ENCODE measurements at regions of chr14 and their contacts with region 1.

Region 1: GRCh38 chr14:103085106-103086091 is 1.4 kb downstream of the LBHD2 start:
- DNase-seq: no peak
- ATAC-seq: no peak
- H3K4me3 ChIP-seq: no peak overlapping the region
- H3K27ac ChIP-seq: no peak overlapping the region
- H3K4me1 ChIP-seq: peaks cover 0 to 8% (median 0%) of the 10 kb centered on the region in 9 donors
- H3K27me3 ChIP-seq: peaks cover 0 to 51% (median 42%) of the 10 kb centered on the region in 7 donors
- CTCF ChIP-seq: peak in 3 of 9 donors; percentile 4 to 12 (median 5)

Region 2: GRCh38 chr14:102878174-102878969 is 207.0 kb before region 1 on chr14:
- intact Hi-C with region 1: loop called in 1 of 10 experiments (anchors 5 kb)
- DNase-seq: no peak
- ATAC-seq: no peak
- H3K4me3 ChIP-seq: no peak overlapping the region
- H3K27ac ChIP-seq: no peak overlapping the region
- H3K4me1 ChIP-seq: no peaks in the 10 kb centered on the region
- H3K27me3 ChIP-seq: no peaks in the 10 kb centered on the region
- CTCF ChIP-seq: no peak

Region 3: GRCh38 chr14:103220134-103220981 is 135.0 kb after region 1 on chr14:
- intact Hi-C with region 1: no loop called
- DNase-seq: no peak
- ATAC-seq: peak in 4 of 8 donors; percentile 25 to 47 (median 42)
- H3K4me3 ChIP-seq: peak overlapping the region; percentile 18 to 50 (median 38)
- H3K27ac ChIP-seq: no peak overlapping the region
- H3K4me1 ChIP-seq: peaks cover 0 to 11% (median 9%) of the 10 kb centered on the region in 9 donors
- H3K27me3 ChIP-seq: peaks cover 6 to 58% (median 49%) of the 10 kb centered on the region in 7 donors
- CTCF ChIP-seq: no peak